ENCODE measurements at regions of chr11 and their contacts with region 1.

Region 1: GRCh38 chr11:57567515-57568329 is at the start of gene UBE2L6:
- DNase-seq: peak; percentile 51 to 74 (median 67)
- ATAC-seq: peak; percentile 90
- H3K4me3 ChIP-seq: peak within 1 kb of the TSS; percentile 99
- H3K4me3 Mint-ChIP-seq: peak within 1 kb of the TSS; percentile 92 to 100 (median 99)
- H3K27ac ChIP-seq: peak within 1 kb of the TSS; percentile 97
- H3K27ac Mint-ChIP-seq: peak within 1 kb of the TSS; percentile 95 to 100 (median 98)
- H3K4me1 ChIP-seq: peaks cover 9 to 17% of the 10 kb centered on the region in 2 donors
- H3K4me1 Mint-ChIP-seq: peaks cover 37 to 65% (median 50%) of the 10 kb centered on the region in 7 donors
- H3K27me3 ChIP-seq: no peaks in the 10 kb centered on the region
- H3K27me3 Mint-ChIP-seq: no peaks in the 10 kb centered on the region
- total RNA-seq, gene UBE2L6: 51.1 to 326 (median 64.2) TPM

Region 2: GRCh38 chr11:57345555-57346211 is 222.0 kb before region 1 on chr11:
- CTCF ChIA-PET with region 1: no interaction called
- POLR2A ChIA-PET with region 1: no interaction called
- intact Hi-C with region 1: loop called in 1 of 2 experiments (anchors 1 kb)
- DNase-seq: peak; percentile 39 to 68 (median 62)
- ATAC-seq: peak; percentile 87
- H3K4me3 ChIP-seq: no peak overlapping the region
- H3K4me3 Mint-ChIP-seq: no peak overlapping the region
- H3K27ac ChIP-seq: no peak overlapping the region
- H3K27ac Mint-ChIP-seq: no peak overlapping the region
- H3K4me1 ChIP-seq: no peaks in the 10 kb centered on the region
- H3K4me1 Mint-ChIP-seq: peaks cover 0 to 10% (median 0%) of the 10 kb centered on the region in 7 donors
- H3K27me3 ChIP-seq: no peaks in the 10 kb centered on the region
- H3K27me3 Mint-ChIP-seq: no peaks in the 10 kb centered on the region

Region 3: GRCh38 chr11:57644748-57645688 is 77.3 kb after region 1 on chr11:
- CTCF ChIA-PET with region 1: interaction called, 86 read pairs
- POLR2A ChIA-PET with region 1: interaction called, 8 read pairs
- intact Hi-C with region 1: loop called (anchors 1 kb)
- DNase-seq: peak; percentile 61 to 91 (median 85)
- ATAC-seq: peak; percentile 87
- H3K4me3 ChIP-seq: no peak overlapping the region
- H3K4me3 Mint-ChIP-seq: no peak overlapping the region
- H3K27ac ChIP-seq: no peak overlapping the region
- H3K27ac Mint-ChIP-seq: peak overlapping the region in 2 of 9 donors; percentile 36 to 56
- H3K4me1 ChIP-seq: peaks cover 11 to 14% of the 10 kb centered on the region in 2 donors
- H3K4me1 Mint-ChIP-seq: peaks cover 25 to 60% (median 41%) of the 10 kb centered on the region in 7 donors
- H3K27me3 ChIP-seq: peaks cover 10 to 18% of the 10 kb centered on the region in 2 donors
- H3K27me3 Mint-ChIP-seq: peaks cover 30 to 60% (median 47%) of the 10 kb centered on the region in 5 donors

Region 4: DNA sequence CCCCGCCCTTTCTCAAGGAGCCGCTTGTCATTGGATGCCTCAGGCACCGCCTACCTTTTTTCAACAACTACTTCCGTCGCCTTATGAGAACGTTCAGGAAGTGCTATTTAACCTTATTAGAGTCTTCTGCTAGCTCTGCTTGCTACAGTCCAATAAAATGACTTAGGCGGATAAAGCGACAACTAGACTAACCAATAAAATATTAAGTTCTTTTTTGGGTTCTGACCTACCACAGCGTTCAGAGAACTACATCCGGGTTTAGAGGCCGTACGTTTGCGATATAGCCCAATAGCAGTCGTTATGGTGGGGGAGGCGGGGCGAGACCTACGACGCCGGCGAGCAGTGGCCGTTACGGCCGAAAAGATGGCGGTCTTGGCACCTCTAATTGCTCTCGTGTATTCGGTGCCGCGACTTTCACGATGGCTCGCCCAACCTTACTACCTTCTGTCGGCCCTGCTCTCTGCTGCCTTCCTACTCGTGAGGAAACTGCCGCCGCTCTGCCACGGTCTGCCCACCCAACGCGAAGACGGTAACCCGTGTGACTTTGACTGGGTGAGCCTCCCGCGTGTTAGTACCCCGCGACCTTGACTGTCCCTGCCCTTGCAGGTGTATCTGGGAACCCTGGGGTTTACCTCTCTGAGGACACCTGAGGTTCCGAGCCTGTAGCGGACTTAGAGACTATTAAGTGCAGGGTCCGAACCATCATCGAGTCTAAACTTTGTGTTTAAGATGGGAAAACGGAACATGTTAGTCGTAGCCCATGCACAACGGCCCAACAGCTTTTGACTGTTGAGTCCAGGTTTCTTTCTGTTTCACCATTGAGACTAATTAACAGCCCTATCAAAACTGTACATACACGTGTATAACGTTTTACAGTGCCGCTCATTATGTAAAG is 144.8 kb after region 1 on chr11 and contains the start of gene TMX2:
- CTCF ChIA-PET with region 1: no interaction called
- POLR2A ChIA-PET with region 1: interaction called, 5 read pairs
- intact Hi-C with region 1: loop called (anchors 1 kb)
- DNase-seq: peak; percentile 73 to 96 (median 91)
- ATAC-seq: peak; percentile 94
- H3K4me3 ChIP-seq: peak within 1 kb of the TSS; percentile 98
- H3K4me3 Mint-ChIP-seq: peak within 1 kb of the TSS; percentile 86 to 99 (median 98)
- H3K27ac ChIP-seq: peak within 1 kb of the TSS; percentile 95
- H3K27ac Mint-ChIP-seq: peak within 1 kb of the TSS; percentile 87 to 99 (median 95)
- H3K4me1 ChIP-seq: peaks cover 25 to 33% of the 10 kb centered on the region in 2 donors
- H3K4me1 Mint-ChIP-seq: peaks cover 14 to 61% (median 52%) of the 10 kb centered on the region in 7 donors
- H3K27me3 ChIP-seq: no peaks in the 10 kb centered on the region
- H3K27me3 Mint-ChIP-seq: no peaks in the 10 kb centered on the region
- total RNA-seq, gene TMX2: 43.0 to 67.3 (median 64.8) TPM

Region 5: GRCh38 chr11:57800444-57801182 is 232.9 kb after region 1 on chr11:
- CTCF ChIA-PET with region 1: interaction called, 13 read pairs
- POLR2A ChIA-PET with region 1: interaction called, 4 read pairs
- intact Hi-C with region 1: loop called (anchors 1 kb)
- DNase-seq: peak in 7 of 9 donors; percentile 46 to 70 (median 64)
- ATAC-seq: peak; percentile 93
- H3K4me3 ChIP-seq: no peak overlapping the region
- H3K4me3 Mint-ChIP-seq: peak overlapping the region in 6 of 10 donors; percentile 33 to 57 (median 54)
- H3K27ac ChIP-seq: peak overlapping the region; percentile 39
- H3K27ac Mint-ChIP-seq: peak overlapping the region; percentile 42 to 92 (median 80)
- H3K4me1 ChIP-seq: peaks cover 8 to 10% of the 10 kb centered on the region in 2 donors
- H3K4me1 Mint-ChIP-seq: peaks cover 22 to 40% (median 30%) of the 10 kb centered on the region in 7 donors
- H3K27me3 ChIP-seq: no peaks in the 10 kb centered on the region
- H3K27me3 Mint-ChIP-seq: no peaks in the 10 kb centered on the region

Region 6: GRCh38 chr11:57823859-57824258 is 256.1 kb after region 1 on chr11:
- CTCF ChIA-PET with region 1: no interaction called
- POLR2A ChIA-PET with region 1: no interaction called
- intact Hi-C with region 1: no loop called
- DNase-seq: no peak
- ATAC-seq: no peak
- H3K4me3 ChIP-seq: no peak overlapping the region
- H3K4me3 Mint-ChIP-seq: no peak overlapping the region
- H3K27ac ChIP-seq: no peak overlapping the region
- H3K27ac Mint-ChIP-seq: no peak overlapping the region
- H3K4me1 ChIP-seq: no peaks in the 10 kb centered on the region
- H3K4me1 Mint-ChIP-seq: no peaks in the 10 kb centered on the region
- H3K27me3 ChIP-seq: no peaks in the 10 kb centered on the region
- H3K27me3 Mint-ChIP-seq: peaks cover 0 to 10% (median 0%) of the 10 kb centered on the region in 5 donors

Region 7: GRCh38 chr11:58524232-58525036 is 956.7 kb after region 1 on chr11:
- CTCF ChIA-PET with region 1: interaction called, 3 read pairs
- POLR2A ChIA-PET with region 1: no interaction called
- intact Hi-C with region 1: loop called (anchors 1 to 5 kb)
- DNase-seq: peak in 8 of 9 donors; percentile 39 to 78 (median 70)
- ATAC-seq: peak; percentile 78
- H3K4me3 ChIP-seq: peak overlapping the region; percentile 10
- H3K4me3 Mint-ChIP-seq: peak overlapping the region; percentile 65 to 85 (median 80)
- H3K27ac ChIP-seq: peak overlapping the region; percentile 75
- H3K27ac Mint-ChIP-seq: peak overlapping the region; percentile 84 to 99 (median 97)
- H3K4me1 ChIP-seq: peaks cover 18 to 50% of the 10 kb centered on the region in 2 donors
- H3K4me1 Mint-ChIP-seq: peaks cover 27 to 90% (median 54%) of the 10 kb centered on the region in 7 donors
- H3K27me3 ChIP-seq: no peaks in the 10 kb centered on the region
- H3K27me3 Mint-ChIP-seq: no peaks in the 10 kb centered on the region